Mammary epithelial cell (primary cell): ENCODE measurements at regions of chr4 and their contacts with region 1.

Region 1: GRCh38 chr4:86895692-86896488 is 3.7 kb upstream of the C4orf36 start:
- DNase-seq: peak; percentile 67
- H3K4me3 ChIP-seq: no peak overlapping the region
- H3K27ac ChIP-seq: no peak overlapping the region
- H3K4me1 ChIP-seq: peaks cover 15% of the 10 kb centered on the region
- H3K27me3 ChIP-seq: no peaks in the 10 kb centered on the region
- CTCF ChIP-seq: peak; percentile 61 to 72

Region 2: GRCh38 chr4:86223472-86223871 is 672.4 kb before region 1 on chr4:
- CTCF ChIA-PET with region 1: no interaction called
- dilution Hi-C with region 1: no loop called
- in situ Hi-C with region 1: no loop called
- intact Hi-C with region 1: no loop called
- DNase-seq: peak; percentile 19
- H3K4me3 ChIP-seq: no peak overlapping the region
- H3K27ac ChIP-seq: no peak overlapping the region
- H3K4me1 ChIP-seq: peaks cover 7% of the 10 kb centered on the region
- H3K27me3 ChIP-seq: no peaks in the 10 kb centered on the region
- CTCF ChIP-seq: peak; percentile 49 to 76

Region 3: GRCh38 chr4:86522349-86522748 is 373.5 kb before region 1 on chr4:
- CTCF ChIA-PET with region 1: no interaction called
- dilution Hi-C with region 1: no loop called
- in situ Hi-C with region 1: no loop called
- intact Hi-C with region 1: loop called (anchors 1 kb)
- DNase-seq: no peak
- H3K4me3 ChIP-seq: no peak overlapping the region
- H3K27ac ChIP-seq: no peak overlapping the region
- H3K4me1 ChIP-seq: peaks cover 6% of the 10 kb centered on the region
- H3K27me3 ChIP-seq: no peaks in the 10 kb centered on the region
- CTCF ChIP-seq: peak; percentile 33 to 49

Region 4: DNA sequence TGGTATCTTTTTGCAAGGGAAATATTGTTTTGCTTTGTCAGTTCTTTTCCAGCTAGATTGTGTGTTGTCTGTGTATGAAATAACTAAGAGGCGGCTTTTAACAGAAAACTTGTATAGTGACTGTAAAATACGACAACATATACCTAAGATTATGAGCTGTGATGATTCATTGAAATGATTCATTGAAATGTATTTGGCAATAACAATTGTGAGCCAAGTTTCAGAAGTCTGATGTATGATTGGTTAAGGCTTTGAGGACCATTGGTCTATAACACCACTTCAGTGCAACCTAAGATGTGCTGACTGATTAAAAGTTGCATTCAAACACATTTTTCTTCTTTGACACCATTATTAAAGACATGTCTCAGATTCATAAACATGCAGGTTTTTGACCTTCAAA is 225.2 kb before region 1 on chr4:
- CTCF ChIA-PET with region 1: no interaction called
- dilution Hi-C with region 1: no loop called
- in situ Hi-C with region 1: no loop called
- intact Hi-C with region 1: loop called (anchors 10 kb)
- DNase-seq: peak; percentile 87
- H3K4me3 ChIP-seq: no peak overlapping the region
- H3K27ac ChIP-seq: peak overlapping the region; percentile 32
- H3K4me1 ChIP-seq: peaks cover 10% of the 10 kb centered on the region
- H3K27me3 ChIP-seq: peaks cover 2% of the 10 kb centered on the region
- CTCF ChIP-seq: no peak

Region 5: GRCh38 chr4:86791126-86791525 is 104.8 kb before region 1 on chr4:
- CTCF ChIA-PET with region 1: no interaction called
- dilution Hi-C with region 1: no loop called
- in situ Hi-C with region 1: loop called in 1 of 2 experiments (anchors 10 kb)
- intact Hi-C with region 1: loop called (anchors 5 kb)
- DNase-seq: no peak
- H3K4me3 ChIP-seq: no peak overlapping the region
- H3K27ac ChIP-seq: no peak overlapping the region
- H3K4me1 ChIP-seq: no peaks in the 10 kb centered on the region
- H3K27me3 ChIP-seq: no peaks in the 10 kb centered on the region
- CTCF ChIP-seq: no peak

Region 6: GRCh38 chr4:86845593-86845992 is 50.3 kb before region 1 on chr4:
- CTCF ChIA-PET with region 1: no interaction called
- dilution Hi-C with region 1: no loop called
- in situ Hi-C with region 1: no loop called
- intact Hi-C with region 1: loop called (anchors 1 kb)
- DNase-seq: peak; percentile 89
- H3K4me3 ChIP-seq: no peak overlapping the region
- H3K27ac ChIP-seq: peak overlapping the region; percentile 83
- H3K4me1 ChIP-seq: peaks cover 54% of the 10 kb centered on the region
- H3K27me3 ChIP-seq: no peaks in the 10 kb centered on the region
- CTCF ChIP-seq: no peak

Region 7: GRCh38 chr4:87093443-87094123 is 197.7 kb after region 1 on chr4:
- CTCF ChIA-PET with region 1: interaction called, 12 read pairs
- dilution Hi-C with region 1: no loop called
- in situ Hi-C with region 1: no loop called
- intact Hi-C with region 1: loop called (anchors 1 kb)
- DNase-seq: peak; percentile 89
- H3K4me3 ChIP-seq: no peak overlapping the region
- H3K27ac ChIP-seq: peak overlapping the region; percentile 97
- H3K4me1 ChIP-seq: peaks cover 24% of the 10 kb centered on the region
- H3K27me3 ChIP-seq: no peaks in the 10 kb centered on the region
- CTCF ChIP-seq: peak; percentile 26 to 58